Common myeloid progenitor, CD34-positive (primary cell): ENCODE measurements at regions of chr14 and their contacts with region 1.

Region 1: DNA sequence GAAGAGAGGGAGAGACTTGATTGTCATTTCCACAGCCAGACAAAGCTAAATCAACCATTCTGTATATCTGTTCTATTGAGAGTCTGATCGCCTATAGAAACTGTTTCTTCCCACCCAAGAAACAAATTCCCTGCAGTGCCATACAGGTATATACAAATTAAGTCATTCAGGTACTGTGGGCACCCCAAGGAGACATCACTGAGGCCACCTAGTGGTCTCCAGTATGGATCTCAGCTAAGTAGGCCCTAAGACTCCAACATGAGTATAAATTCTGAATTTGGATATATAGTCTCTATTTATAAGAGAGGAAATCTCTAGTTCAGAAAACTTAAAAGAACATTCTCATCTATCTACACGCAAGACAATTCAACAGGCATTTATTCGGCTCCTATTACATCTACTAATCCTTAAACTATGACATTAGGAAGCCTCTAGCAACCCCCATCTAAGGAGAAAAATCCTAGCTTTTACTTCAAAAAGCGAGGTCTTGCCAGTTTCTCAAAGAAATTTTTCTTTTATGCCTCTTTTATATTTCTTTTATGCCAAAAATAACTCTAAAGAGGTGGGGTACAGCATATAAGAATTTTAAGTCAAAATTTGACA is 62.6 kb downstream of the DCAF5 start:
- DNase-seq: peak; percentile 39 to 59 (median 59)
- H3K4me3 ChIP-seq: no peak overlapping the region
- H3K27ac ChIP-seq: no peak overlapping the region
- H3K4me1 ChIP-seq: peaks cover 0 to 9% (median 8%) of the 10 kb centered on the region in 4 experiments
- H3K27me3 ChIP-seq: no peaks in the 10 kb centered on the region

Region 2: DNA sequence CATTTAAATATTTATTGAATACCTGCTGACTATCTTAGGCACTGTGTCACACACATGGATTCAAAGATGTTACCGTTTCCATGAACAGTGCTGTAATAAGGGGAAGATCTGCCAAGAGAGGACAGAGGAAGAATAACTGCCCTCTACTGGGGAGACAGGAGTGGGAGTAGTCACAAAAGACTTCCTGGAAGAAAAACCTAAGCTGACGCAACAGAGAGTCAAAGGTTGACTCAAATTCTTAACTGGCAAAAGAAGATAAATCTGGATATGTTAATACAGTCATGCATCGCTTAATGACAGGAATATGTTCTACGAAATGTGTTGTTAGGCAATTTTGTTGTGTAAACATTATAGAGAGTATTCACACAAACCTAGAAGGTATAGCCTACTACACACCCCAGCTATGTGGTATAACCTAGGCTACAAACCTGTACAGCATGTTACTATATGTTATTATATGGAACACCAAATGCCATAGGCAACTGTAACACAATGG is 11.1 kb after region 1 on chr14:
- CTCF ChIA-PET with region 1: interaction called, 20 read pairs
- POLR2A ChIA-PET with region 1: no interaction called
- DNase-seq: peak; percentile 34 to 67 (median 64)
- H3K4me3 ChIP-seq: no peak overlapping the region
- H3K27ac ChIP-seq: peak overlapping the region in 1 of 2 experiments; percentile 0
- H3K4me1 ChIP-seq: no peaks in the 10 kb centered on the region
- H3K27me3 ChIP-seq: no peaks in the 10 kb centered on the region

Region 3: DNA sequence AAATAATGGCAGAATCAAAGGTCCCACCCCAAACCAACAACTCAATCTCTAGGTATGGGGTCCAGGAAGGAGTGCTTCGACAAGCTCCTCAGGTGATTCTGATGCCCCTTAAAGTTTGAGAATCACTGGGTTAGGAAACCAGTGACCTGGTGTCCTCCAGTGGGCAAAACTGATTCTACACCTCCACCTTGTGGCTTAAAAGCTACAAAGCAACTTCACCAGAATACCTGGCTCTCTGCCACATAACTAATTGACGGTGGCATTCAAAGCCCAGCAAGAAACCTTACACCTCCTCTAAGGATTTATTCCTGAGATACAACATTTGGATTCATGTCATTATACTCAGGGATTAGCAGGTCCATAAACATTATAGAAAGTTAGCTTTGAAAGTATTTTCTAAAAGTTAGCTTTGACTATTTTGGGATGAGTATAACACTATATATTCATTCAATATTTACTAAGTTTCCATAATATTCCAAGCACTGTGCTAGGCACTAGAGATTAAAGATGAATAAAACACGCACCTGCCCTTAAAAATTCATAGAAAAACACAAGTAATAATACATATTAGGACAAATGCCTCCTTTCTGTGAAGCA is 17.2 kb after region 1 on chr14:
- CTCF ChIA-PET with region 1: interaction called, 20 read pairs
- POLR2A ChIA-PET with region 1: no interaction called
- DNase-seq: peak; percentile 64 to 80 (median 73)
- H3K4me3 ChIP-seq: no peak overlapping the region
- H3K27ac ChIP-seq: no peak overlapping the region
- H3K4me1 ChIP-seq: no peaks in the 10 kb centered on the region
- H3K27me3 ChIP-seq: no peaks in the 10 kb centered on the region